A549 (cell line): ENCODE measurements at regions of chr7 and their contacts with region 1.

Region 1: DNA sequence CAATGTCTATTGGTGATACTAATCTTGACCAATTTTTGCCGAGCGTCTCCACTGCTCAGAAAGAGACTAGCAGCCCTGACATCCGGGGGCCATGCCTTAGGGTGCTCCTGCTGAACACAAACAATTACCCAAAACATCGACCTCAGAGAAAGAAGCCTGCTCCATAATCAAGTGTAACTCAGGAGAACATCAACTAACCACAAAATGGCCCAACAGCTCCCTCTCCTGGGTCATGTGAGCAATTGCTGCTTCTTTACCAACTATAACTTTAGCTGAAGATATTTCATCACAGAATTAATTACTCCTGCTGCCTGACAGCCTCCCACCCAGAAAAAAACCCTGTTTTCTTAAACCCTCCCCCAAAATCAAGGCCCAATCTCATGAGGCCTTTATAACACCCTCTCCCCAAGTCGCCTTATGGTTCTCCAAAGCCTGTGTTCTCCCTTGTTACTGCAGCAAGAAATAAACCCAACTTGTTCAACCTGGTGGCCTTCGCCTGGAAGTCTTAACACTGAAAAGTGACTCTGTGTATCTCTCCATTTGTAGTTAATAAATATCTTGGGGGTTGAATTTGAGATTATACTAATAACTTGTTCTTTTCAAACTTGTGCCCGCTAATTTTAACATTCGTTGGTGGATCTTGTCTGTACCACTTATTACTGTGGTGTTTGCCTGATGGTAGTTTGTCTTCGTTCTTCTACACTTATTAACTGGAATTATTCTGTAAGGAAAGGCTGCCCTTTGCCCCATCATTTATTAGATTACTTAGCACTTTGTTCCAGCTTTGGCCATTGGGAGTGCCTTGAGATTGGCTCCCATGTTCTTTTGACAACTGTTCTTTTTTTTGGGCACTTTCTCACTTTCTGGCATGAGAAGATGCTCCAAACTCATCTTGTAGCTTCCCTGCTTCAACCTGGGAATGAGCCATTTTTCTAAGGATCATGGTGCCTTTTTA is 21.2 kb upstream of the RAMP3 start:
- DNase-seq: peak; percentile 76 to 90
- ATAC-seq: peak; percentile 77 to 90
- H3K4me3 ChIP-seq: no peak overlapping the region
- H3K27ac ChIP-seq: no peak overlapping the region
- H3K4me1 ChIP-seq: no peaks in the 10 kb centered on the region
- CTCF ChIP-seq: peak; percentile 92
- EP300 ChIP-seq: no peak
- POLR2A ChIP-seq: no peak
- RAD21 ChIP-seq: peak; percentile 92 to 95

Region 2: GRCh38 chr7:44587843-44588711 is 548.3 kb before region 1 on chr7:
- CTCF ChIA-PET with region 1: interaction called, 26 read pairs
- POLR2A ChIA-PET with region 1: no interaction called
- DNase-seq: peak in 1 of 2 experiments; percentile 61
- ATAC-seq: peak; percentile 84 to 85
- H3K4me3 ChIP-seq: no peak overlapping the region
- H3K27ac ChIP-seq: peak overlapping the region in 1 of 2 experiments; percentile 50; a peak in 1 of 6 replicates
- H3K4me1 ChIP-seq: 0 out of 3 replicates have a peak, but pooled peaks cover 1% of the 10 kb centered on the region
- CTCF ChIP-seq: peak; percentile 90
- EP300 ChIP-seq: no peak
- POLR2A ChIP-seq: no peak
- RAD21 ChIP-seq: peak; percentile 92 to 94

Region 3: GRCh38 chr7:44706788-44707560 is 429.4 kb before region 1 on chr7:
- CTCF ChIA-PET with region 1: no interaction called
- POLR2A ChIA-PET with region 1: no interaction called
- DNase-seq: no peak
- ATAC-seq: no peak
- H3K4me3 ChIP-seq: no peak overlapping the region
- H3K27ac ChIP-seq: no peak overlapping the region
- H3K4me1 ChIP-seq: no peaks in the 10 kb centered on the region
- CTCF ChIP-seq: no peak
- EP300 ChIP-seq: no peak
- POLR2A ChIP-seq: no peak
- RAD21 ChIP-seq: no peak

Region 4: DNA sequence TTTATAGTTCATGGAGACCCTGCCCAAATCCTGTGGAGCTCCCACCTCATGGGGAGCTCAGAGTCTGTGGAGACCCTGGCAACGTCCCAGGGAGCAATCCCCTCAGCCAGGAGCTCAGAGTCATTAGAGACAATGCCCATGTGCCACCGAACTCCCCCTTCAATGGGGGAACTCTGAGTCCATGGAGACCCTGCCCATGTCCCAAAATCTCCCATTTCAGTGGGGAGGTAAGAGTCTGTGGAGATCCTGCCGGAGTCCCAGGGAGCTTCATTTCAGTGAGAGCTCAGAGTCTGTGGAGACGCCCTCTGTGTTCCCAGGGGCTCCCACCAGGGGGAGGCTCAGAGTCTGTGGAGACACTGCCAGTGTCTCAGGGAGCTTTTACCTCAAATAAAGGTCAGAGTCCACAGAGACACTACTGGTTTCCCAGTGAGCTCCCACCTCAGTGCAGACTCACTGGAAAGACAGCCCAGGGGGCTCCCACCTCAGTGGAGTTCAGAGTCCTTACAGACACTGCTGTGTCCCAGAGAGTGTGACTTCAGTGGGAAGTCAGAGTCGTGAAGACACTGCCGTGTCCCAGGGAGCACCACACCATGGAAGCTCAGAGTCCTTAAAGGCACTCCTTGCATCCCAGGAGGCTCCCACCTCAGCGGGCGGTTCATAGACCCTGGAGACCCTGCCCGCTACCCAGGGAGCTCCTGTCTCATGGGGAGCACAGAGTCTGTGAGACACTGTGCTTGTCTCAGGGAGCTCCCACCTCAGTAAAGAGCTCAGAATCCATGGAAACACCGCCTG is 162.6 kb before region 1 on chr7:
- CTCF ChIA-PET with region 1: interaction called, 33 read pairs
- POLR2A ChIA-PET with region 1: no interaction called
- DNase-seq: peak in 1 of 2 experiments; percentile 35
- ATAC-seq: peak; percentile 52 to 81; a peak in 5 of 6 replicates
- H3K4me3 ChIP-seq: no peak overlapping the region
- H3K27ac ChIP-seq: no peak overlapping the region; a peak in 1 of 6 replicates
- H3K4me1 ChIP-seq: peaks cover 4% of the 10 kb centered on the region; the same call in 1 of the 3 replicates
- CTCF ChIP-seq: peak; percentile 25; the same call in 1 of the 3 replicates
- EP300 ChIP-seq: no peak
- POLR2A ChIP-seq: no peak
- RAD21 ChIP-seq: peak in 1 of 2 experiments; percentile 46; a peak in 2 of 5 replicates

Region 5: DNA sequence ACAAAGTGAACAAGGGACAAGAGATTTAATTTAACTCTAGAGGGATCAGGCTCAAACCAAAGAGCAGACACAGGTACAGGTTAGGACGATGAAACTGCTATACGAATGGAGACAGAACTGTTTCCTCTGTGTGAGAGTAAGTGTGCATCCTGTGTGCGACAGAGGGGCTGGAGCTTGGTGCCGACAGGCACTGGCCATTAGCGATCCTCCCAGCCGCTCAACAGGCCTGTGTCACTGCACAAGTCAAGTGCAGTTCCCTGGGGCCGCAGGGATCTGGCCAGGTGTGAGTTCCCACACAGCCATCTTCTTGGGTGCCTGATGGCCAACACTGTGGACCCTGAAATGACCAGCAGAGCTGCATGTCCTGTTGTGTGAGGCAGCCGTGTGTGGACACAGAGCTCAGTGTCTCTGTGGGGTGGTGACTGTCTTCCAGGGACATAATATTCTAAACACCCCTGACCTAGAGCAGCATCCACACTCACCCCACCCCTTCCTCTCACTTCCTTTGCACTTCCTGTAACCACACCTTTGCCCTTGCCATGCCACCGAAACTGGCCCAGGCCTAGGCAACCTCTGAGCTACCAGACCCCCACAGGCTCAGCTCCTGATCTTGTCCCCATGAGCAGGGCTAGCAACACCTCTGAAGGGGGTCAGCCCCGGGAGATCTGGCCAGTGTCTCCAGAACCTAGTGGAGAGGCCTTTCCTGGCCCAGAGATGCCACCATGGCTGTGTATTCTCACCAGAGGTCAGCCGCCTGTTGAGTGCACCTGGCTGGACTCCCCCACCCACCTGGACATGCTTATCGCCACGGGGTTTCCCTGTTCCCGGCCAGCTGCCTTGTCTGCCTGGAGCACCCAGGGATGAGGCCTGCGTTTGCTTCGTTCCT is 13.2 kb before region 1 on chr7:
- CTCF ChIA-PET with region 1: interaction called, 40 read pairs
- POLR2A ChIA-PET with region 1: no interaction called
- DNase-seq: no peak
- ATAC-seq: no peak
- H3K4me3 ChIP-seq: no peak overlapping the region
- H3K27ac ChIP-seq: no peak overlapping the region
- H3K4me1 ChIP-seq: no peaks in the 10 kb centered on the region
- CTCF ChIP-seq: no peak
- EP300 ChIP-seq: no peak
- POLR2A ChIP-seq: no peak
- RAD21 ChIP-seq: no peak